Mammary epithelial cell (primary cell): ENCODE measurements at regions of chr2 and their contacts with region 1.

Region 1: DNA sequence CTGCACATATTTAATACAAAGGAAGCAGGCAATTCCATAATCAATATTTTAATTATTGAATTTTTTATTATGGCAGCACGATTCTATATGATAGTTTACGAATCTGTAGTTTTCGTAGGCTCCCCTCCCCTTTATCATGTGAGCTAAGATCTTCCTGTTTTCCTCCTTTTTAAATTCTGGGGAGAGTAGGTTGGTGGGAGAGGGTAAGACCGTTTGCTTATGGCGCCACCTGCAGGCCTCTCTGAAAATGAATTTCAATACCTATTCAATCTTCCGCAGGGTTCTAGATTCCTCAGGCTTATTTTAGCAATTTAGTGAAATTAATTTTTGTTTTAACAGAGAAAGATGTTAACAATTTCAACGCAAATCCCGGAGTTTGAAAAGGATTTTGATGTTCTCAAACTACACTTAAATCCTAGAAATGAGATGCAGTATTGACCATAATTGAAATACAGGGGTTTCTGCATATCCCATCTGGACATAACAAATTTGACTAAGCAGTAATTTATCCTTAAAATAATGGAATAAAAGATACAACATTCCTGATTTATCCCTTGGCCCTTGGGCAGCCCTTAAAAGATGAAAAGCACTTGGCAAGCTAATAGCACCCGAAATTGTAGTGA is 12.8 kb upstream of the GBX2 start:
- DNase-seq: no peak
- H3K4me3 ChIP-seq: no peak overlapping the region
- H3K27ac ChIP-seq: no peak overlapping the region
- H3K4me1 ChIP-seq: peaks cover 21% of the 10 kb centered on the region
- H3K27me3 ChIP-seq: no peaks in the 10 kb centered on the region
- CTCF ChIP-seq: peak; percentile 59 to 70

Region 2: DNA sequence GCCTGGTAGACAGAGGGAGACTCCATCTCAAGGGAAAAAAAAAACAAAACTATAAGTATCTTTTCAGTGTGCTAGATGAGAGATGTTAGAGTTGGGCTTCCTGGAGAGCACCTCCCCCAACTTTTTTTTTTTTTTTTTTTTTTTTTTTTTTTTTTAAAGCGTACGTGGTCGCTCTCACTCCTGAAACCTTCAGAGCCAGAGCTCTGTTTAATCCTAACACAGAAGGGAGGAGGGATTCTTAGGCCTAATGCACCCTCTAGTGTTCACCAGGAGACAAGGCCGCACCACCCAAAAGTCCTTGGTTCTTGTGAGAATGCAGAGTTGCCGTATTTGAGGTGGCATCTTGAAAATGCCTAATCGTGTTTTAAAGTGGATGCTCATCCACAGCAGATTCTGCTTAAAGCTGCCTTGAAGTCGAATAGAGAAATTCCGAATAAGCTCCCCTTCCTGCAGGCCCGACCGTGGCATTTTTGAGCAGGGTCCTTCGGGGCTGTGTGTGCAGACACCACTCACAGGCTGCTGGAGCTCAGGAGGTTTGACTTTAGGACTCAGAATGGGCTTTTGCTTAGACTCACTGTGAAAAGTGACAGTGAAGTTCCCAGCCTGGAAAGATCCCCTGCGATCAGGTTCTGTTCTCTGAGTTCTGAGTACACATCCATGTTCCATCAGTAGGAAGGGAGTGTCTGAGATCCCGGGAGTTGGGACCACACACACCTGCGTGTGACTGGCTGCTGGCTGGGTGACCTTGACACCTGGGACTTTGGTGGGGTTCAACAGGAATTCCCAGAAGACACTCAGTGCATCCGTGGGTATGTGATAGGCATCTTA is 434.5 kb before region 1 on chr2:
- CTCF ChIA-PET with region 1: interaction called, 11 read pairs
- dilution Hi-C with region 1: no loop called
- in situ Hi-C with region 1: no loop called
- intact Hi-C with region 1: no loop called
- DNase-seq: peak; percentile 66
- H3K4me3 ChIP-seq: no peak overlapping the region
- H3K27ac ChIP-seq: no peak overlapping the region
- H3K4me1 ChIP-seq: peaks cover 18% of the 10 kb centered on the region
- H3K27me3 ChIP-seq: no peaks in the 10 kb centered on the region
- CTCF ChIP-seq: peak; percentile 60 to 81

Region 3: DNA sequence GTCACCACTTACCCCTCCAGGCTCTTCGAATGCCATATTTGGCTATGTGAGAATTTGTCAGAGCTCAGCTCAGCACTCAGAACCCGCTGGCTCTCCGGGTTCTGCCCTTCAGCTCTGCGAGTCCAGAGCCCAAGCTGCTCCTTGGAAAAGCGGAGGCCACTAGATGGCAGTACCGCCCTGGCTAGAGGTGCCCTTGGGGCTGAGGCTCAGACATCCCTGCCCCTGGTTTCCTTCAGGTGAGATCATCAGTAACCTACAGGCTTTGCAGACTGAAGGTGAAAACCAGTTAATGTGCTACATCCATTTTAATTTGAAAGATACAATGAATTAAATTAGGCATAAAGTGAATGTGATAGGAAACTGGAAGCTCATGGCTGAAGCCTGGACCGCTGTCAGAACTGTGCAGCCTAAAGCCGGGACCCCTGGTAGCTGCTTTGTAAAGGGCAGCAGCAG is 401.5 kb before region 1 on chr2:
- CTCF ChIA-PET with region 1: interaction called, 6 read pairs
- dilution Hi-C with region 1: loop called (anchors 25 kb)
- in situ Hi-C with region 1: loop called (anchors 5 kb)
- intact Hi-C with region 1: loop called (anchors 1 kb)
- DNase-seq: peak; percentile 67
- H3K4me3 ChIP-seq: no peak overlapping the region
- H3K27ac ChIP-seq: no peak overlapping the region
- H3K4me1 ChIP-seq: no peaks in the 10 kb centered on the region
- H3K27me3 ChIP-seq: no peaks in the 10 kb centered on the region
- CTCF ChIP-seq: peak; percentile 90 to 96

Region 4: DNA sequence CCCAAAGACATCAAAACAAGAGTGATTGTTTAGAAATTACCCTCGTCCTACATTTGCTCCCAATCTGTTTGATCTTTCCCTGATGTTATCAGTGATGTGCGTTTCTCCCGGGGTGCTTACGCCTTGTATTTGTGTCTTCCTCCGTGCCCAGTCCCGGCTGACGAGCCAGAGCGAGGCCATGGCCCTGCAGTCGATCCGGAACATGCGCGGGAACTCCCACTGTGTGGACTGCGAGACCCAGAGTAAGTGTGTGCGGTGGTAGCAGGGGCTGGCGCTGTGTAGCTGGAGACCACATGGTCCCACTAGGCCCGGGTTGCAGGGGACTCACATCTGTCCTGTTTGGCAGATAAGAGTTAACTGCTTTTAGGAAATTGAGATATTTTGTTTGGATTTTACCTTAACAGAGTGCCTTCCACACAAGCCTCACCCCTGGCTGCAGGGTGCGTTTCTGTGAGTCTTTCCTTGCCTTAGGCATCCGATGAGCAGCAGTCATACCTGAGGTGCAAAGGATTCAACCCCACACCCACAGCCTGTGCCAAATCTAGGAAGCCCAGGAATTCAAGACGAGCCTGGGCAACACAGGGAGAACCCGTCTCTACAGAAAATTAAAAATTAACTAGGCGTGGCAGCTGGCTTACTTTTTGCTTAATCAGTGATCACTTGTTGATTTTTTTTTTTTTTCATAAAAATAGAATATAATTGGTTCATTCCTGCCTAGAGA is 140.2 kb before region 1 on chr2:
- CTCF ChIA-PET with region 1: no interaction called
- dilution Hi-C with region 1: no loop called
- in situ Hi-C with region 1: no loop called
- intact Hi-C with region 1: loop called (anchors 5 kb)
- DNase-seq: peak; percentile 83
- H3K4me3 ChIP-seq: no peak overlapping the region
- H3K27ac ChIP-seq: no peak overlapping the region
- H3K4me1 ChIP-seq: peaks cover 21% of the 10 kb centered on the region
- H3K27me3 ChIP-seq: no peaks in the 10 kb centered on the region
- CTCF ChIP-seq: no peak

Region 5: DNA sequence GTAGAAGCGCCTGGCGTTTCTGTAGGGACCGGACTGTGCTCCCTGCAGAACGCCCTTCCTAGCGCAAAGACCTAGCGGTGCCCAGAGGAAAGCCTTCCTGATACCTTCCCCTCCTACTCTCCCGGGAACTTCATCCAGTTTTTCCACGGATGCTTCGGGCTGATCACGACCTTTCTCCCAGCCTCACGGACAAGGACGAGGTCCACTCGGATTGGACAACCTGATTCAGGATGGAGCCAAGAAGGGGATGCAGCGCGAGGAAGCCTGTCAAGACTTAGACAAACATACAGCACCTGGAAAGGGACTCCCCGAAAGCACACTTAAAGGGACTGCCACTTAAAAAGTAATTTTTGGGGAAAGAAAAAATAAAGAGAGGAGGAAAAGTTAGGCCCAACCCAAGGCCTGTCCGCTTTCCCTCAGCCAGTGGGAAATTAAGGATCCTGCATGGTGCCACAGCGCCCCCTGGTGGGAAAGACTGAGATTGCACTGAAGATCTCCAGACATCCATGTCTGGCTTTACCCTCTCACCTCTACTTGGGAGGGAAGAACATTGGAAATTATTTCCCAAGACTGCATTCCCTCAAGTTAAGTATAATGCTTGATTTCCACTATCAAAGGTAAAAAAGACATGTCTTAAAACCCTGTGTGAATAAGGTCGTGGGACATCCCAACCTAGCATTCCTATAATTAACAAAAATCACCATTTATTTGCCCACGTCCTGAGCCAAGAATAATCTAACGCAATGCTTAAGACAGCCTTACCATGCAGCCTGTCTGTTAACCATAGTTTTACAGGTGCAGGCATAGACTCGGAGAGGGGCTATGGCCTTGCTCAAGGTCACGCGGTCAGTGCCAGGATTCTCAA is 891.4 kb after region 1 on chr2:
- CTCF ChIA-PET with region 1: no interaction called
- dilution Hi-C with region 1: no loop called
- in situ Hi-C with region 1: no loop called
- intact Hi-C with region 1: loop called (anchors 5 kb)
- DNase-seq: peak; percentile 31
- H3K4me3 ChIP-seq: no peak overlapping the region
- H3K27ac ChIP-seq: no peak overlapping the region
- H3K4me1 ChIP-seq: no peaks in the 10 kb centered on the region
- H3K27me3 ChIP-seq: no peaks in the 10 kb centered on the region
- CTCF ChIP-seq: peak; percentile 94 to 99